Activated naive CD4-positive, alpha-beta T cell treated with anti-CD3 and anti-CD28 coated beads for 36 hours (primary cell): ENCODE measurements at regions of chr15 and their contacts with region 1.

Region 1: GRCh38 chr15:50145451-50145872 is 26.4 kb upstream of the ATP8B4 start:
- DNase-seq: no peak
- H3K4me3 Mint-ChIP-seq: no peak overlapping the region
- H3K27ac Mint-ChIP-seq: no peak overlapping the region
- H3K4me1 Mint-ChIP-seq: peaks cover 13% of the 10 kb centered on the region
- H3K27me3 Mint-ChIP-seq: no peaks in the 10 kb centered on the region

Region 2: GRCh38 chr15:48352474-48353072 is 1792.9 kb before region 1 on chr15:
- CTCF ChIA-PET with region 1: no interaction called
- intact Hi-C with region 1: loop called (anchors 10 kb)
- DNase-seq: peak; percentile 68
- H3K4me3 Mint-ChIP-seq: no peak overlapping the region
- H3K27ac Mint-ChIP-seq: no peak overlapping the region
- H3K4me1 Mint-ChIP-seq: peaks cover 2% of the 10 kb centered on the region
- H3K27me3 Mint-ChIP-seq: no peaks in the 10 kb centered on the region

Region 3: DNA sequence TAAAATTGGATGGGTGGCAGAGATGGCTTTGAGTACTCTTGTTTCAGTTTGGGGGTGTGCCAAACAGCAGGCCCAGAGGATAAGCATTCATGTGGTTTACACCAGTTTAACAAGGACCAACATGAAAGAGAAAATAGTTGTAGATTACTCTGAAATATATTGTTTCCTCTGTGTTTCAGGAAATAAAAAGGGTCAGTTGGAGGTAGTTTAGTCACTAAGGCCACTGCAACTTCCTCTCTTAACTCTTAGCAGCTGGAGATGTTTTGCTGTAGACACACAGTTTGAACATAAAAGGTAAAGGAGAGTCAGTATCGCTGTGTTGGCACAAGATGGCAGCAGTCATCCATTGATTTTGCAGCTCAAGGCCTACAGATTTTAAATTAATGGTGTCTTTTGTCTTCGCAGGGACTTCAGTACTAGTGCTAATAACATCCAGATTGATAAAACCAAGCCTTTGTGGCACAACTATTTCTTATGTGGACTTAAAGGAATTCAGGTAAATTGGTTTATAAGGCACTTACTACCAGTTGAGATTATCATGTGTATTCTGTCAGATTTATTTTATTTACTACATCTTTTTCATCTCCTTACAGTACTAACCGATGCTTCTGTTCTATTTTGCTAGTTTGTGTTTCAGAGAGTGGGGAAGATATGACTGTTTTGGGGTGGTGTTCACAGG is 909.9 kb before region 1 on chr15:
- CTCF ChIA-PET with region 1: interaction called, 4 read pairs
- intact Hi-C with region 1: loop called (anchors 1 kb)
- DNase-seq: peak; percentile 67
- H3K4me3 Mint-ChIP-seq: no peak overlapping the region
- H3K27ac Mint-ChIP-seq: no peak overlapping the region
- H3K4me1 Mint-ChIP-seq: peaks cover 3% of the 10 kb centered on the region
- H3K27me3 Mint-ChIP-seq: no peaks in the 10 kb centered on the region

Region 4: DNA sequence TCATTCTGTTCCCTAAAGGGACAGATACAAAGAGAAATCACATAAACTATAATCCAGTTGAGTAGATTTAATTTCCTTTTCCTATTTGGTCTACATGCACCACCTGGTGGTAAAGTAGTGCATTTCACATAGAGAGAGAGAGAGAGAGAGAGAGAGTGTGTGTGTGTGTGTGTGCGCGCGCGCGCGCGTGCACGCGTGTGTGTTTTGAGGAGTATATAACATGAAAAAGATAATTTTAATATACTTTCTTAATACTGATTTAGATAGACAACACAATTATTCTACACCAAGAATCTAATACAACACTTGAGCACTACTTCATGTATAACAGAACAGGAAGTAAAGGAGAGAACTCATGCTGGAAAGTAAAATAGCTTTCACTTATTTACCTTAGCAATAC is 723.5 kb before region 1 on chr15:
- CTCF ChIA-PET with region 1: interaction called, 3 read pairs
- intact Hi-C with region 1: loop called (anchors 5 kb)
- DNase-seq: peak; percentile 25
- H3K4me3 Mint-ChIP-seq: no peak overlapping the region
- H3K27ac Mint-ChIP-seq: no peak overlapping the region
- H3K4me1 Mint-ChIP-seq: peaks cover 4% of the 10 kb centered on the region
- H3K27me3 Mint-ChIP-seq: no peaks in the 10 kb centered on the region

Region 5: DNA sequence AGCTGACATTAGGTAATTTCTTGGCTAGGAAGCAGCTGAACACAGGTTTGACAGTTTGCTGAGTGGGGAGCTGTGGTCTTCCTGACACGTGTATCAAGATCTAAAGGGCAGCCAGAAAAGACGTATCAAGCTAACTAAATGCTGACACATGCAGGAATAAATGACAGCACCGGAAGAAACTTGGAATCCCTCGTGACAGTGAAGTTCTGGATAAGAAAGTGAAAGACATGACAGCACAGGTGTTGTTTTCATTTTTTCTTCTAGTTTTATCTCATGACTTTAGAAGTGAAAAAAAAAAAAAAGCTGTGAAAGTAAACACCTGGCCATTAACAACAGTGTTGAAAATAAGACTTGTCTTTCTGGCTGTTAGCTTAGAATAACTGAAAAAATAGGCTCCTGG is 673.7 kb before region 1 on chr15:
- CTCF ChIA-PET with region 1: interaction called, 3 read pairs
- intact Hi-C with region 1: loop called (anchors 2 kb)
- DNase-seq: peak; percentile 13
- H3K4me3 Mint-ChIP-seq: no peak overlapping the region
- H3K27ac Mint-ChIP-seq: no peak overlapping the region
- H3K4me1 Mint-ChIP-seq: peaks cover 3% of the 10 kb centered on the region
- H3K27me3 Mint-ChIP-seq: no peaks in the 10 kb centered on the region

Region 6: GRCh38 chr15:49876401-49877038 is 268.9 kb before region 1 on chr15:
- CTCF ChIA-PET with region 1: interaction called, 3 read pairs
- intact Hi-C with region 1: loop called (anchors 2 kb)
- DNase-seq: no peak
- H3K4me3 Mint-ChIP-seq: no peak overlapping the region
- H3K27ac Mint-ChIP-seq: no peak overlapping the region
- H3K4me1 Mint-ChIP-seq: no peaks in the 10 kb centered on the region
- H3K27me3 Mint-ChIP-seq: no peaks in the 10 kb centered on the region

Region 7: DNA sequence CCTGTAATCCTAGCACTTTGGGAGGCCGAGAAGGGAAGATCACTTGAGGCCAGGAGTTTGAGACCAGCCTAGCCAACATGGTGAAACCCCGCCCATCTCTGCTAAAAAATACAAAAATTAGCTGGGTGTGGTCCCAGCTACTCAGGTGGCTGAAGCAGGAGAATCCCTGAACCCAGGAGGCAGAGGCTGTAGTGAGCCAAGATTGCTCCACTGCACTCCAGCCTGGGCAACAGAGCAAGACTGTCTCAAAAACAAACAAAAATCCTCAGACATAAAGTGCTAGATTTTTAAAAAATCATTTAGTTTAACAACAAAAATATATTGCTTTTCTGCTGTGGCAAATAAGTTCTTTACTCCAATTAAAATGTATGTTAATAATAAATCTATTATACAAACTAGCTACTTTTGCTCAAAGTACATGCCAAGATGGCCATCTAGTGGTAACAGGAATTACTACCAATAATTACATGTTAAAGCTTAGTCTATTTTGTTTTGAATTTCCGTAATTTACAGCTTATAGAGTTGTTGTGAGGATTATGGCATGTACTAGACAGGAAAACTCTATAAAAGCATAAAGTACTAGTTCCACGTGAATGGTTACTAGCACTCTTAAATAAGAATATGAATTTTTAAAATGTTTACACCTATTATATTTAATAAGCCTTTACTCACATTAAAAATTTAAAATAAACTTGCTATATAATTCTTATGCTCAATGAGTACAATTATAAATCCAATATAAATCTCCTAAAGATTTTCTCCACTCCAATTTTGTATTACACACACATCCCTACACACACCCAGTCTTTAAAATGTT is 170.6 kb after region 1 on chr15:
- CTCF ChIA-PET with region 1: interaction called, 22 read pairs
- intact Hi-C with region 1: loop called (anchors 1 kb)
- DNase-seq: no peak
- H3K4me3 Mint-ChIP-seq: no peak overlapping the region
- H3K27ac Mint-ChIP-seq: no peak overlapping the region
- H3K4me1 Mint-ChIP-seq: peaks cover 25% of the 10 kb centered on the region
- H3K27me3 Mint-ChIP-seq: no peaks in the 10 kb centered on the region